ENCODE measurements at regions of chr20 and their contacts with region 1.

Region 1: GRCh38 chr20:46562373-46563169 is 12.1 kb upstream of the OCSTAMP start:
- DNase-seq: peak; percentile 84
- ATAC-seq: peak; percentile 85
- H3K4me3 Mint-ChIP-seq: no peak overlapping the region
- H3K27ac Mint-ChIP-seq: no peak overlapping the region
- H3K4me1 Mint-ChIP-seq: peaks cover 11% of the 10 kb centered on the region
- H3K27me3 Mint-ChIP-seq: no peaks in the 10 kb centered on the region
- CTCF ChIP-seq: peak; percentile 84

Region 2: DNA sequence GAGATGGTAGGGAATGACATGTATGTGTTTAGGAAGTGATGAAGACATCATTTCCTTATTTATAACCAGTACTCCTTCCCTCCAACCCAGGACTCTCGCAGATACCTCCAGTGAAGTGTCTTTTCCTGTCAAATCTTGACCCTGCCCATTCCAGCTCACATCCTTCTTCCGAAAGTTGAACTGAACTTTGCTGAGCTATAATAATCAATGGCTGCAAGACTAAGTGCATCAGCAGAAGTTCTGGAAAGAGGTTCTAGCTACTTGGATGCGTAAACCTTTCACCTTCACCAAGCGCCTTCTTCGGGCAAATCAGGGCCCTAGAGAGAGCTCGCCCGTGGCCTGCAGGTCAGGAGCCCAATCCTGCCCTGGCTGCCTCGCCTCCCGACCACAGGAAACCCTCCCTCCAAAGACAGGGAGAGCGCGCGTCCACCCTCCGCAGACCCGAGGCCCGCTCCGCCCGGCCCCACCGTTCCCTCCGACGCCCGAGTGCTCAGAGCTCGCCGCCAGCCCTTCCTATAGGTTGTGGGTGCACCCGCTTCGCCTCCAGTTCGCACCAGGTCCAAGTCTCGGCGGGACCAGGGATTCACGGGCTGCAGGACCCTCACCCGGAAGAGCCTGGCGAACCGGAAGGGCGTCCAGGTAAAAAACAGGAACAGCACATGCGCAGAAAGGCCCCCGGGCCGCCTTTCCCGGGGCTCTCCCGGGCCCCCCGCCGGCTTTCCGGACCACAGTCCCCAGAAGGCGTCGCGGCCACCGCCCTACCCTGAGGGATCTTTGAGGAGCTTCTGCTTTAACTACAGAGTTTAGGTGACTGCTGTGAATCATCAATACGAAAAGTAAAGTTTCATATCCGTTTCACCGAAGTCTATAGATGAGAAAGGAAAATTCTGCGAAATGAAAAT is 49.4 kb before region 1 on chr20 and contains the start of gene ZNF334:
- CTCF ChIA-PET with region 1: interaction called, 10 read pairs
- POLR2A ChIA-PET with region 1: no interaction called
- DNase-seq: peak; percentile 88
- ATAC-seq: peak; percentile 97
- H3K4me3 Mint-ChIP-seq: peak within 1 kb of the TSS; percentile 89
- H3K27ac Mint-ChIP-seq: no peak within 1 kb of the TSS
- H3K4me1 Mint-ChIP-seq: peaks cover 4% of the 10 kb centered on the region
- H3K27me3 Mint-ChIP-seq: peaks cover 16% of the 10 kb centered on the region
- CTCF ChIP-seq: no peak
- total RNA-seq, gene ZNF334: 18.7 to 20.1 TPM (median 19.2 TPM) in 3 replicates

Region 3: GRCh38 chr20:46520976-46521579 is 41.5 kb before region 1 on chr20:
- CTCF ChIA-PET with region 1: interaction called, 15 read pairs
- POLR2A ChIA-PET with region 1: no interaction called
- DNase-seq: peak; percentile 77
- ATAC-seq: peak; percentile 99
- H3K4me3 Mint-ChIP-seq: no peak overlapping the region
- H3K27ac Mint-ChIP-seq: no peak overlapping the region
- H3K4me1 Mint-ChIP-seq: no peaks in the 10 kb centered on the region
- H3K27me3 Mint-ChIP-seq: peaks cover 22% of the 10 kb centered on the region
- CTCF ChIP-seq: peak; percentile 59

Region 4: DNA sequence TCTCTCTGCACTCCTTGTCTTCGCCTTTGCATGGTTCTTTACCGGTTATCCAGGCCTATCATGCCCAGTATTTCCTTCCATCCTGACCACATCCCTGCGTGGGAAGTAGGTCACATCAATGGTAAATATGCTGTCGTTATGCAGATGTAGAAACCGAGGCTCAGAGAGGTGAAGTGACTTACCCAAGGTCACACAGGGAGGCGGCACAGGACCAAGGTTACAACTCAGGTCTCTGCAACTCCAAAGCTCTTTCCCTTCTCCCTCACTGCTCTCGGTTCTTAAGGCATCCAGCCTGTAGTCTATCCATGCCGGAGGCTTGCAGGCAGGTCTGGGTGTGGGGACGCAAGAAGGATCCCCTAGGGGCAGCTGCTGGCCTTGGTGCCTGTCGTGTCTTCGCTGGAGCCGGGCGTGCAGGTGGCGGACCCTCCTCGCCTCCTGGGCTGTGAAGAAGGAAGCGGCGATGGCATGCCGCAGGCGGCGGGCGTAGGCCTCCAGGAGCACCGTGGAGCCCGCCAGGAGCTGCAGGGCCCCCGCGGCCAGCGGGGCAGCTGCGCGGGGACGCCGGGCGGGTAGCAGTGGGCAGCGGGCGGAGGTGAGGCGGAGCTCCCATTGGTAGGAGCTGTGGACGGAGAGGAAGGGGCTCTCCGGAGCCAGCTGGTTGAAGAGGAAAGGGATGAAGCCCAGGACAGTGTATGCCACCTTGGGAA is 21.2 kb before region 1 on chr20:
- CTCF ChIA-PET with region 1: interaction called, 13 read pairs
- POLR2A ChIA-PET with region 1: no interaction called
- DNase-seq: no peak
- ATAC-seq: no peak; the same call in none of the 2 replicates
- H3K4me3 Mint-ChIP-seq: no peak overlapping the region
- H3K27ac Mint-ChIP-seq: no peak overlapping the region
- H3K4me1 Mint-ChIP-seq: peaks cover 13% of the 10 kb centered on the region
- H3K27me3 Mint-ChIP-seq: no peaks in the 10 kb centered on the region
- CTCF ChIP-seq: no peak

Region 5: DNA sequence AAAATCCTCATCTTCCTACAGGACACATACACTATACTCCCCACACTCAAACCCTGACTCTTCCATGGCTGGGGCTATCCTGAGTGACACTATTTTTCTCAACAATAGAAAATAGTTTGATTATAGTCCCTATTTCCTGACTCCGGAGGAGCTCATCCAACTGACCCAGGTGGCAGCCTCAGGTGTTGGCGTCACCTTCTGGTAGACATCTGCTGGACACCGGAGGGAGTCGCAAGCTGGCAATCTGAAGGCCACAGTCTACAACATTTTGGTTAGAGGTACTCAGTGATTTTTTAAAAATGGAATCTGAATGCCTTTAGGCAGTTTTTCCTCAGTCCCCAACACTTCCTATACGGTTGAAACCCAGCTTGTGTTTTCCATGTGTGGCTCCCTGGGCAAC is 20.1 kb after region 1 on chr20:
- CTCF ChIA-PET with region 1: interaction called, 34 read pairs
- POLR2A ChIA-PET with region 1: no interaction called
- DNase-seq: no peak
- ATAC-seq: no peak
- H3K4me3 Mint-ChIP-seq: no peak overlapping the region
- H3K27ac Mint-ChIP-seq: no peak overlapping the region
- H3K4me1 Mint-ChIP-seq: peaks cover 26% of the 10 kb centered on the region
- H3K27me3 Mint-ChIP-seq: peaks cover 2% of the 10 kb centered on the region; the same call in 1 of the 2 replicates
- CTCF ChIP-seq: no peak

Region 6: DNA sequence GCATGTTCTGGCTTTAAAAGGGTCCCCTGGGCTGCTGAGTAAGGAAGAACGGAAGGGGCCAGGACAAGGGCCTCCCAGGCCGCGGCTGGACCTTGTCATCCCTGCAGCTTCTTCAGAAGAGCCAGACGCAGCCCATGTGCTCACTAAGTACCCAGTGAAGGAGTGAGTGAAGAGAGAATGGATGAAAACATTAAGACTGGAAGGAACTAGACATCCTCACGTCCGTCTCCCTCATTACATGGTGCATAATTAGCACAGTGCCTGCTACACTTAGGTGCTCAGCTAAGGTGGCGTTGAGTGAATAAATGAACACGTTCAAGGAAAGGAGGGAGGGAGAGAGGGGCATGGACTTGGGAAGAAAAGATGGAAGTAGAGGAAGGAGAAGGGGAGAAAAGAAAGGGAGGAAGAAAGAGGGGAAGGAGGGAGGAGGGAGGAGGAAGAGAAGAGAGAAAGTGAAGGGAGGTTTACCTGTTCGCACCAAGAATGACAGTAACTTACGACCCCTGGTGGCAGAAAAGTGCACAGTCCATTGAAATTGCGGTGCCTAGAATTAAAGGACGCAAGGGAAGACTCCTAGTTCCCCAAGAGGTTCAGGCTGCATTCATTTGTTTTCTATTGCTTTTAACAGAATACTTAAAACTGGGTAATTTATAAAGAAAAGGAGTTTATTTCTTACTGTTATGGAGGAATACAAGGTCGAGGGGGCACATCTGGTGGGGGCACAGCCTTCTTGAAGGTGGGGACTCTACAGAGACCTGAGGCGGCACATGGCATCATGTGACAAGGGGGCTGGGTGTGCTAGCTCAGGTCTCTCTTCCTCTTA is 118.7 kb after region 1 on chr20:
- CTCF ChIA-PET with region 1: interaction called, 22 read pairs
- POLR2A ChIA-PET with region 1: no interaction called
- DNase-seq: peak; percentile 81
- ATAC-seq: peak; percentile 21
- H3K4me3 Mint-ChIP-seq: no peak overlapping the region; the same call in 1 of the 2 replicates
- H3K27ac Mint-ChIP-seq: no peak overlapping the region
- H3K4me1 Mint-ChIP-seq: peaks cover 45% of the 10 kb centered on the region
- H3K27me3 Mint-ChIP-seq: no peaks in the 10 kb centered on the region
- CTCF ChIP-seq: peak; percentile 88

Region 7: DNA sequence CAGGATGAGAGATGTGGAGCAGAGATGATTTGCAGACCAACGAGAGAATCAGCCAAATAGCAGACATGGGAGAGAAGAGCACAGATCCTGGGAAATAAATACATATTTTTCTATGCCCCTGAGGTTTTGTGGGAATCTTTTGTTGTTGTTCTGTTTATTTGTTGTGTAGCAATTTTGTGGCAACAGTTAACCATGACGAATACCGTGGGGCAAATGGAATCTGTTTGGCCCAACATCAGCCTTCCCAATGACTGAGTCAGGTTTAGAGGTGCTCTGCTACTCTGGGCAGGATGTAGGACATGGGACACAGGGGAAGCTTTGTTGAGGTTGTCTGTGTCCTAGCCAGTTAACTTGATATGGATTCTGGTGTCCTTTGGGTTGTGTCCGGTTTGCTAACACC is 139.0 kb after region 1 on chr20:
- CTCF ChIA-PET with region 1: interaction called, 10 read pairs
- POLR2A ChIA-PET with region 1: no interaction called
- DNase-seq: no peak
- ATAC-seq: no peak
- H3K4me3 Mint-ChIP-seq: no peak overlapping the region
- H3K27ac Mint-ChIP-seq: no peak overlapping the region
- H3K4me1 Mint-ChIP-seq: peaks cover 31% of the 10 kb centered on the region
- H3K27me3 Mint-ChIP-seq: no peaks in the 10 kb centered on the region
- CTCF ChIP-seq: no peak